HEK293 (cell line): ENCODE measurements at regions of chr3 and their contacts with region 1.

Region 1: GRCh38 chr3:129249276-129250065 is at the start of gene COPG1:
- H3K4me3 ChIP-seq: peak within 1 kb of the TSS; percentile 95
- H3K27ac ChIP-seq: peak within 1 kb of the TSS; percentile 38; the same call in 1 of the 2 replicates
- H3K4me1 ChIP-seq: no peaks in the 10 kb centered on the region
- CTCF ChIP-seq: no peak

Region 2: GRCh38 chr3:129052675-129053074 is 196.8 kb before region 1 on chr3:
- CTCF ChIA-PET with region 1: interaction called, 37 read pairs
- POLR2A ChIA-PET with region 1: interaction called, 3 read pairs
- H3K4me3 ChIP-seq: no peak overlapping the region
- H3K27ac ChIP-seq: no peak overlapping the region
- H3K4me1 ChIP-seq: no peaks in the 10 kb centered on the region
- CTCF ChIP-seq: no peak

Region 3: DNA sequence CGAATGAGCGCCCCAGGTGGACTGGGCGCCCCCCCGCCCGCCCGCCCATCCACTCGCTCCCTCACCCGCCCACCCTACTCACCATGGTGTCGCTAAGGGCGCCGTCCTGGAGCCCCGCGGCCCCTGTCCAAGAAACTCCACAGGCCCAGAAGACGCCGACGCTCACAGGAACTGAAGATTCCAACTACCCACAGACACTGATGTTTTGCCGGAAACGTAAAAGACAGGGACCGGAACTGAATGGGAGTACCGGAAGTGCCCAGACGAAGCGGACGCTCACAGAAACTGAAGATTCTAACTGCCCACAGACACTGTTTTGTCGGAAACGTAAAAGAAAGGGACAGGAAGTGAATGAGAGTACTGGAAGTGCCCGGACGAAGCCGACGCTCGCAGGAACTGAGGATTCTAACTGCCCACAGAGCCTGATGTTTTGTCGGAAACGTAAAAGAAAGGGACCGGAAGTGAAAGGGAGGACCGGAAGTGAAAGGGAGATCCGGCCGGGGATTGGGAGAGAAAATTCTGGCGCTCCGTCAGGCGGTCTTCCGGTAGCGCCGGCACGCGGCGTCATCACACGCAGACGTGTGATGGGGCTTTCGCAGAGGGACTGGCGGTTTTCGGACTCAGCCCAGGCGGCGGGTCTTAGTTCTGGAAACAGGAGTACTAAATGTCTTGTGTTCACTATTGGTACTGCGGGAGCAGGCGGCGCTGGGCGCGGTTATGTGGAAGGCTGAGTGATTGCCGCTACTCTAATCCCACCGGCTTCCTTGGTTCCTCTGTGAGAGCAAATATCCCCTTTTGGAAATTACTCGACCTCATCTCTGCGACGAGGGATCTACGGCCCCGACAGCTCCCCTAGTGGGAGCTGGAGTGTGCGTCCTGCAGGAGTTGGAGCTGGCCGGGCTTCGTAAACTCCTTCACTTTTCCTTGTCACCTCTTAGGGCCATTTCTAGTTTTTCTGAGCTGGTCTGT is 88.3 kb before region 1 on chr3 and contains the start of gene ISY1:
- CTCF ChIA-PET with region 1: interaction called, 32 read pairs
- POLR2A ChIA-PET with region 1: interaction called, 4 read pairs
- H3K4me3 ChIP-seq: peak within 1 kb of the TSS; percentile 78
- H3K27ac ChIP-seq: peak within 1 kb of the TSS; percentile 84
- H3K4me1 ChIP-seq: no peaks in the 10 kb centered on the region
- CTCF ChIP-seq: peak; percentile 64

Region 4: DNA sequence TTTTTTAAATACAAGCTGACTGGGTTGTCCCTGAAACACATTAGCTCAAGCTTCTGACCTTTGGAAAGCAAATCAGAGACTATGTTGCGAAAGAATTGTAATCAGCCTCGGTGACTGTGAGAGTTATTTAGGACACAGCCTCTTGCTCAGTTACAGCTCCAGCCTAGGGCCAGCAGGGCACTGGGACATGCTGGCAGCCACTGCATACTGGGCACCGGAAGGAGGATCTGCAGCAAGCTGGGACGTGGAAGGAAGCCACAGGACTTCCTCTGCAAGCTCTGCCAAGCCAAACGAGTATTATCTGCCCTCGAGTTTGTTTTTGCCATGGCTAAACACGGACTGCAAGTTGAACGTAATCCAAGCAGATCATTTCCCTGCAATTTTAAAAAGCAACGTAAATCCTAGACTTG is 24.5 kb before region 1 on chr3:
- CTCF ChIA-PET with region 1: interaction called, 29 read pairs
- POLR2A ChIA-PET with region 1: interaction called, 3 read pairs
- H3K4me3 ChIP-seq: no peak overlapping the region
- H3K27ac ChIP-seq: no peak overlapping the region
- H3K4me1 ChIP-seq: no peaks in the 10 kb centered on the region
- CTCF ChIP-seq: no peak

Region 5: GRCh38 chr3:129316131-129317013 is 66.9 kb after region 1 on chr3:
- CTCF ChIA-PET with region 1: interaction called, 6 read pairs
- POLR2A ChIA-PET with region 1: interaction called, 14 read pairs
- H3K4me3 ChIP-seq: peak overlapping the region; percentile 97
- H3K27ac ChIP-seq: peak overlapping the region; percentile 83; the same call in 1 of the 2 replicates
- H3K4me1 ChIP-seq: no peaks in the 10 kb centered on the region
- CTCF ChIP-seq: peak; percentile 85

Region 6: DNA sequence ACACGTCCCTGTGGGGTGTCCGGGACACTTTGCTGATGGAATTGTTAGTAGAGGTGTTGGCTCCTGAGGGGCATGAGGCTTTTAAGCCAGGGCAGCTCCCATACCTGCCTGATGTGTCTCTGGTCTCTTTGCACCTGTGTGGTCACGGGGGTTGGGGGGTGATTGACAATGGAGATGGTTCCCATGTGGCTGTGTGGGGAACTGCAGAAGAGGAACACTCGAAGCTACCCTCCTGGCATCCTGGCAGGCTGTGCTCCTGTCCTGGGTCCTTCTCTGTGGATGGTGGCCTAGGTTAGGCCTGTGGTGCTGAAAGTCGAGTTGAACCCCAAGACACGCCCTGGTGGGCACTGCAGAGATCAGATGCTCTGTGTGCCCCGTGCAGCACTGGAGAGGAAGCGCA is 102.6 kb after region 1 on chr3:
- CTCF ChIA-PET with region 1: no interaction called
- POLR2A ChIA-PET with region 1: no interaction called
- H3K4me3 ChIP-seq: no peak overlapping the region
- H3K27ac ChIP-seq: no peak overlapping the region
- H3K4me1 ChIP-seq: no peaks in the 10 kb centered on the region
- CTCF ChIP-seq: no peak